IMR-90 (cell line): ENCODE measurements at regions of chr15 and their contacts with region 1.

Region 1: DNA sequence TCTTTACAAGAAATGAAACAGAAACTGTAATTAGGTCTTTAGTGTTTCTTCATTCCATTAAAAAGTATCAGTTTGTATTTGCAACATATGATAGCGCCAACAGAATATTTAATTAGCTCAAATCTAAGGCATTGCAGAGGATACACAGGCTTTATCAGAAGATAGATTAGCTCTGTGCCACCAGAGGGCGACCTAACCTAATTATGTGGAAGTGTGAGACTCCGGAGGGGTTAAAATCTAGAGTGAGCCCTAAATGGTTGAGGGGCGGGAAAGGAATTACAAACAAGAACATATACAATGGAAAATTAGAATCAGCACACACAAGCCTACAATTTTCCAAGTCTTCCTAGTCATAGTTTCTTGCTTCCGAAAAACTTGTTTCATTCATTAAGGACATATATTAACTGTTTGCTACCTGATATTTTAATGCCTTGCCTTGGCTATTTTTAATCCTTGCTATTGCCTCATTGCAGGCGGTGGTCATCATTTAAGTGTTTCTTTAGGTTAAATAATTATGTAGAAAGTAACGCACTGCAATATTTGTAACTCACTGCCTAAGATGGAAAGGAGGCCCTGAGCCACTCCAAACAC is 18.0 kb upstream of the RYR3 start:
- DNase-seq: peak; percentile 53
- ATAC-seq: peak; percentile 82
- H3K4me3 ChIP-seq: no peak overlapping the region
- H3K27ac ChIP-seq: no peak overlapping the region
- H3K4me1 ChIP-seq: no peaks in the 10 kb centered on the region
- H3K27me3 ChIP-seq: peaks cover 20% of the 10 kb centered on the region
- CTCF ChIP-seq: peak; percentile 62
- POLR2A ChIP-seq: no peak
- RAD21 ChIP-seq: peak; percentile 66

Region 2: DNA sequence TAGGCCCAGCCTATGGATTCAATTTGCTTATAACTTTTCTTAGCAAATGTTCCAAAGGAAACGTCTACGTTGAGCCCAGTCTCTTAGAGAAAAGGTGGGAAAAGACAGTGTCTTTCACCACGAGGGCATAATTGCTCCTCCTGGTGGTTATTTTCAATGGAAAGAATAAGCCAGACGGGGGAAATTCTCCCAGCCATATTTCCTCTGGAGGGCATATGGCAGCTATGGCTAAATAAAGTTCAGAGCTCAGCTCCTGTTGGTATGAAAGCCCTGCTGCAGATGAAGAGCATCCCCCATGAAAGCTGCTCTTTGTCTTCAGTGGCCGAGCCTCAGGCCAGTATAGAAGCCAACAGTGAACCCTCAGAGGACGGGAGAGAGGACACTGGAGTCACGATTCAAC is 315.9 kb after region 1 on chr15:
- CTCF ChIA-PET with region 1: no interaction called
- POLR2A ChIA-PET with region 1: no interaction called
- dilution Hi-C with region 1: no loop called
- in situ Hi-C with region 1: no loop called
- intact Hi-C with region 1: loop called (anchors 5 kb)
- DNase-seq: no peak
- ATAC-seq: no peak
- H3K4me3 ChIP-seq: no peak overlapping the region
- H3K27ac ChIP-seq: no peak overlapping the region
- H3K4me1 ChIP-seq: no peaks in the 10 kb centered on the region
- H3K27me3 ChIP-seq: peaks cover 2% of the 10 kb centered on the region; the same call in 1 of the 2 replicates
- CTCF ChIP-seq: peak; percentile 22; the same call in 1 of the 2 replicates
- POLR2A ChIP-seq: no peak
- RAD21 ChIP-seq: no peak

Region 3: DNA sequence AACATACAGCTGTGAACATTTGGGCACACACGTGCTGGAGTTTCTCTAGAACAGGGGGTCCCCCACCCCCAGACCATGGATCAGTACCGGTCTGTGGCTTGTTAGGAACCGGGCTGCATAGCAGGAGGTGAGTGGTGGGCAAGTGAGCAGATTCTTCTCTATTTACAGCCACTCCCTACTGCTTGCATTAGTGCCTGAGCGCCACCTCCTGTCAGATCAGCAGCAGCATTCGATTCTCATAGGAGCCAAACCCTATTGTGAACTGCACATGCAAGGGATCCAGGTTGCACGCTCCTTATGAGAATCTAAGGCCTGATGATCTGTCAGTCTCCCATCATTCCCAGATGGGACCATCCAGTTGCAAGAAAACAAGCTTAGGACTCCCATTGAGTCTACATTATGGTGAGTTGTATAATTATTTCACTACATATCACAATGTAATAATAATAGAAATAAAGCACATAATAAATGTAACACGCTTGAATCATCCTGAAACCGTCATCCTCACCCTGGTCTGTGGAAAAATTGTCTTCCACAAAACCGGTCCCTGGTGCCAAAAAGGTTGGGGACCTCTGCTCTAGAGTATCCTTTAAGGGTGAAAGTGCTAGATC is 701.3 kb after region 1 on chr15:
- CTCF ChIA-PET with region 1: no interaction called
- POLR2A ChIA-PET with region 1: no interaction called
- dilution Hi-C with region 1: no loop called
- in situ Hi-C with region 1: no loop called
- intact Hi-C with region 1: loop called (anchors 10 kb)
- DNase-seq: peak; percentile 51
- ATAC-seq: peak; percentile 91
- H3K4me3 ChIP-seq: no peak overlapping the region
- H3K27ac ChIP-seq: no peak overlapping the region
- H3K4me1 ChIP-seq: no peaks in the 10 kb centered on the region
- H3K27me3 ChIP-seq: no peaks in the 10 kb centered on the region
- CTCF ChIP-seq: peak; percentile 60
- POLR2A ChIP-seq: no peak
- RAD21 ChIP-seq: peak; percentile 72

Region 4: GRCh38 chr15:34065941-34066340 is 773.1 kb after region 1 on chr15:
- CTCF ChIA-PET with region 1: no interaction called
- POLR2A ChIA-PET with region 1: no interaction called
- dilution Hi-C with region 1: no loop called
- in situ Hi-C with region 1: no loop called
- intact Hi-C with region 1: loop called (anchors 5 kb)
- DNase-seq: no peak
- ATAC-seq: no peak
- H3K4me3 ChIP-seq: no peak overlapping the region
- H3K27ac ChIP-seq: no peak overlapping the region
- H3K4me1 ChIP-seq: no peaks in the 10 kb centered on the region
- H3K27me3 ChIP-seq: no peaks in the 10 kb centered on the region
- CTCF ChIP-seq: no peak
- POLR2A ChIP-seq: no peak
- RAD21 ChIP-seq: no peak